CD8-positive, alpha-beta T cell (primary cell): ENCODE measurements at regions of chr12 and their contacts with region 1.

Region 1: DNA sequence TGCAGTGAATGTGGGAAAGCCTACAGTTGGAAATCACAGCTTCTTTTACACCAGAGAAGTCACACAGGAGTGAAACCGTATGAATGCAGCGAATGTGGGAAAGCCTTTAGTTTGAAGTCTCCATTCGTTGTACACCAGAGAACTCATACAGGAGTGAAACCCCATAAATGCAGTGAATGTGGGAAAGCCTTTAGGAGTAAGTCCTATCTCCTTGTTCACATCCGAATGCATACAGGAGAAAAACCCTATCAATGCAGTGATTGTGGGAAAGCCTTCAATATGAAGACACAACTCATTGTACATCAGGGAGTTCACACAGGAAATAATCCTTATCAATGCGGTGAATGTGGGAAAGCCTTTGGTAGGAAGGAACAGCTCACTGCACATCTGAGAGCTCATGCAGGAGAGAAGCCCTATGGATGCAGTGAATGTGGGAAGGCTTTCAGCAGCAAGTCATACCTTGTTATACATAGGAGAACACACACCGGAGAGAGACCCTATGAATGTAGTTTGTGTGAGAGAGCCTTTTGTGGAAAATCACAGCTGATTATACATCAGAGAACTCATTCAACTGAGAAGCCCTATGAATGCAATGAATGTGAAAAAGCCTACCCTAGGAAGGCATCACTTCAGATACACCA is 24.6 kb downstream of the ZNF26 start:
- DNase-seq: no peak
- ATAC-seq: no peak
- H3K4me3 ChIP-seq: peak overlapping the region in 1 of 2 experiments; percentile 2
- H3K4me3 Mint-ChIP-seq: no peak overlapping the region
- H3K27ac ChIP-seq: no peak overlapping the region
- H3K27ac Mint-ChIP-seq: no peak overlapping the region
- H3K4me1 ChIP-seq: no peaks in the 10 kb centered on the region
- H3K4me1 Mint-ChIP-seq: no peaks in the 10 kb centered on the region
- H3K27me3 ChIP-seq: no peaks in the 10 kb centered on the region
- H3K27me3 Mint-ChIP-seq: no peaks in the 10 kb centered on the region
- CTCF ChIP-seq: no peak

Region 2: DNA sequence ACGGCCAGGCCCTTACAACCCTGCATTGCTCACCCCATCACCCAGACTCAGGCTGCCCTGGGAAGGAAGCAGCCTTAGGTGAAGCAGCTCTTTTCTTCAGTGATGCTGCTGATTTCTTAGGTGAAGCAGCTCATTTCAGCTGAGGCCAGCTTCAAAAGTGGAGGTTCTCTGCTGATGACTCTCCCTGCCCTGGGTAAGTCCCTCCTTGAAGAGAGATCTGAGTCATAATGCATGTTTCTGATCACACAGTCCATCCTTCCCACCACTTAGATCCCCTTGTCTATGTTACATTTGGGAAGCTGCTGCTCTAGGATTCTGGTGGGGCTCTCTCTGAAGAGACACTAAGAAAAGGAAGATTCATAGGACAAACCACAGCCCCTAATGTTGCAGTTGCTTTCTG is 52.8 kb after region 1 on chr12:
- CTCF ChIA-PET with region 1: no interaction called
- POLR2A ChIA-PET with region 1: interaction called, 3 read pairs
- intact Hi-C with region 1: loop called in 1 of 2 experiments (anchors 10 kb)
- DNase-seq: no peak
- ATAC-seq: no peak
- H3K4me3 ChIP-seq: no peak overlapping the region
- H3K4me3 Mint-ChIP-seq: no peak overlapping the region
- H3K27ac ChIP-seq: no peak overlapping the region
- H3K27ac Mint-ChIP-seq: no peak overlapping the region
- H3K4me1 ChIP-seq: no peaks in the 10 kb centered on the region
- H3K4me1 Mint-ChIP-seq: no peaks in the 10 kb centered on the region
- H3K27me3 ChIP-seq: no peaks in the 10 kb centered on the region
- H3K27me3 Mint-ChIP-seq: no peaks in the 10 kb centered on the region
- CTCF ChIP-seq: no peak